ENCODE measurements at regions of chr18 and their contacts with region 1.

Region 1: GRCh38 chr18:3665780-3666525 is 216.0 kb downstream of the TGIF1 start:
- DNase-seq: peak; percentile 55
- H3K4me3 Mint-ChIP-seq: peak overlapping the region; percentile 47
- H3K27ac Mint-ChIP-seq: no peak overlapping the region
- H3K4me1 Mint-ChIP-seq: peaks cover 23% of the 10 kb centered on the region
- H3K27me3 Mint-ChIP-seq: peaks cover 8% of the 10 kb centered on the region

Region 2: DNA sequence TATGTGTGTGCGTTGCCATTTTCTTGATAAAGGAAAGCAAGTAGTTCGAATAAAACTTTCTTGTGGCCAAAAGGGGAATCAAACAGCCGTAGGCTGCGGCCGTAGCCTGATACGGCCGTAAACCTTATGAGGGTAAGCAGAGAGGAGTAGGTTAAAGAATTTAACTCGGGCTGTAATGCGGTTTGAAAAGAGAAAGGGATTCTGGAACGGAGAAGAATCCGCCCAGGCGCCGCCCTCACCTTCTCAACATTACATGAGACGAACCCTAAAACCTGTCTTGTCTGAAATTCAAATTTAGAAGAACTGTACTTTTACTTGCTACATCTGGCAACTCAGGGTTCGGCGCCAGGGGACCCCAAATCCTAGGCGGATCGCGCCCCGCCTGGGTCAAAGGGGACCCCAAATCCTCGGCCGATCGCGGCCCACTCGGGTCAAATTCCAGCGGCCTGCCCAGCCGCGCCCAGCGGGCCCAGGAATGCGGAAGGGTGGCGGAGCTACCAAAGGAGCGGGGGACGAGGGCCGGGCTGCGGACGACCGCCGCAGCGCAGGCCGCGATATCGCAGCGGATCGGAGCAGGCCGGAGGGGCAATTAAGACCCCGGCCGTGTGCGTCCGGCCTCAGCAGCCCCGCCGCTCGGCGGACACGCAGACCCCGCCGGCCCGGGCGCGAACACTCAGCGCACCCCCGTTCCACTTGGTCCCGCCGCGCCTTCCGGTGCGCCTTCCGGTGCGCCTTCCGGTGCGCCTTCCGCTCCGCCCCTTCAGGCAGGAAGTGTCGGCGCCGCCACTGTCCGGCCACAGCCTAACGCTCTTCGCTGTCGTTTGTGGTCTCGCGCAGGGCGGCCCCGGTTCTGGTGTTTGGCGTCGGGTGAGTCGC is 404.3 kb before region 1 on chr18 and contains the start of gene MYL12B:
- intact Hi-C with region 1: loop called (anchors 5 kb)
- DNase-seq: peak; percentile 77
- H3K4me3 Mint-ChIP-seq: peak within 1 kb of the TSS; percentile 97
- H3K27ac Mint-ChIP-seq: peak within 1 kb of the TSS; percentile 99
- H3K4me1 Mint-ChIP-seq: peaks cover 69% of the 10 kb centered on the region
- H3K27me3 Mint-ChIP-seq: no peaks in the 10 kb centered on the region
- total RNA-seq, gene MYL12B: 243 and 245 TPM in 2 replicates

Region 3: GRCh38 chr18:3281456-3282400 is 384.2 kb before region 1 on chr18:
- intact Hi-C with region 1: loop called (anchors 1 kb)
- DNase-seq: no peak
- H3K4me3 Mint-ChIP-seq: no peak overlapping the region
- H3K27ac Mint-ChIP-seq: peak overlapping the region; percentile 38
- H3K4me1 Mint-ChIP-seq: peaks cover 5% of the 10 kb centered on the region
- H3K27me3 Mint-ChIP-seq: no peaks in the 10 kb centered on the region

Region 4: GRCh38 chr18:3297025-3297984 is 368.6 kb before region 1 on chr18:
- intact Hi-C with region 1: loop called (anchors 5 kb)
- DNase-seq: peak; percentile 91
- H3K4me3 Mint-ChIP-seq: peak overlapping the region; percentile 87
- H3K27ac Mint-ChIP-seq: peak overlapping the region; percentile 59
- H3K4me1 Mint-ChIP-seq: peaks cover 7% of the 10 kb centered on the region
- H3K27me3 Mint-ChIP-seq: peaks cover 35% of the 10 kb centered on the region

Region 5: GRCh38 chr18:3454365-3455089 is 211.4 kb before region 1 on chr18:
- intact Hi-C with region 1: loop called (anchors 1 kb)
- DNase-seq: no peak
- H3K4me3 Mint-ChIP-seq: peak overlapping the region; percentile 86
- H3K27ac Mint-ChIP-seq: peak overlapping the region; percentile 97
- H3K4me1 Mint-ChIP-seq: peaks cover 50% of the 10 kb centered on the region
- H3K27me3 Mint-ChIP-seq: no peaks in the 10 kb centered on the region

Region 6: GRCh38 chr18:3604498-3605408 is 61.2 kb before region 1 on chr18:
- intact Hi-C with region 1: loop called (anchors 1 kb)
- DNase-seq: no peak
- H3K4me3 Mint-ChIP-seq: no peak overlapping the region
- H3K27ac Mint-ChIP-seq: no peak overlapping the region
- H3K4me1 Mint-ChIP-seq: peaks cover 16% of the 10 kb centered on the region
- H3K27me3 Mint-ChIP-seq: no peaks in the 10 kb centered on the region

Region 7: DNA sequence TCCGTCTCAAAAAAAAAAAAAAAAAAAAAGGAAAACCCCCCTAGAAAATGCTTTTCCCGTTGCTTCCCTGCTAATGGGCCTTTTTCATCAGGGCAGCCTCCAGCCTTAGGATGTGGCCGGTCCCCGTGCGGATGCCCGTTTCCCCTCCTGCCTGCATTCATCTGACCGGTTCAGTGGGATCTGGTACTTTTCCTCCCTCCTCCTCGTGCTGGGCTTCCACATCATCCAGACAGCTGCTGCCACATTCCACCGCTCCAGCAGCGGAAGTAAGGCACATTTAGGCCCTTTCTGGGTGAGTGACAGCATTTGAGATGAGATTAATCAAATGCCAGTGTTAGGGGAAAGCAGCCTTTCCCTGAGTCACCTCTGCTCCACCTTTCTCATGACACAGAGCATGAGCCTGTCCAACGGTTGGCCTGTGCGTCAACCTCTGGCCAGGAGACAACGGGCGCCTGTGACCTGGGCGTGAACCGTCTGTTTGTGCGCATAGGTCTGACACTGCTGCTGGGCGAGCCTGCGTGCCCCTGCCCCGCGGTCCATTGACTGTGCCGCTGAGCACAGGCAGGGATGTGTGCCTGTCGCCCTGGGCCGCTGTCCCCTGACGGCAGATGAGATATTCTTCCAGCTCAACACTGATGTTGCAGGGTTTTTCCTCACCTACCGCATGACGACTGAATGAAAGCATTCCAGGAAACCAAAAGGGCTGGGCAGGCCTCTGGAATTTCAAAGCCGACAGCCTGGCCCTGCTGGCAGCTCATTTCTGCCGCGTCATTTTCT is 42.0 kb before region 1 on chr18:
- intact Hi-C with region 1: loop called (anchors 2 kb)
- DNase-seq: no peak
- H3K4me3 Mint-ChIP-seq: peak overlapping the region; percentile 60
- H3K27ac Mint-ChIP-seq: peak overlapping the region; percentile 92
- H3K4me1 Mint-ChIP-seq: peaks cover 37% of the 10 kb centered on the region
- H3K27me3 Mint-ChIP-seq: no peaks in the 10 kb centered on the region